ENCODE measurements at regions of chr20 and their contacts with region 1.

Region 1: GRCh38 chr20:47411161-47411560 is 54.7 kb upstream of the ZMYND8 start:
- DNase-seq: no peak
- ATAC-seq: no peak
- H3K4me3 ChIP-seq: peak overlapping the region in 4 of 5 experiments; percentile 30 to 56 (median 48)
- H3K4me3 Mint-ChIP-seq: peak overlapping the region; percentile 91
- H3K27ac ChIP-seq: peak overlapping the region; percentile 97 to 99
- H3K27ac Mint-ChIP-seq: peak overlapping the region; percentile 93
- H3K4me1 ChIP-seq: peaks cover 79 to 90% of the 10 kb centered on the region in 2 donors
- H3K4me1 Mint-ChIP-seq: peaks cover 76% of the 10 kb centered on the region
- H3K27me3 ChIP-seq: no peaks in the 10 kb centered on the region
- H3K27me3 Mint-ChIP-seq: no peaks in the 10 kb centered on the region
- CTCF ChIP-seq: no peak

Region 2: DNA sequence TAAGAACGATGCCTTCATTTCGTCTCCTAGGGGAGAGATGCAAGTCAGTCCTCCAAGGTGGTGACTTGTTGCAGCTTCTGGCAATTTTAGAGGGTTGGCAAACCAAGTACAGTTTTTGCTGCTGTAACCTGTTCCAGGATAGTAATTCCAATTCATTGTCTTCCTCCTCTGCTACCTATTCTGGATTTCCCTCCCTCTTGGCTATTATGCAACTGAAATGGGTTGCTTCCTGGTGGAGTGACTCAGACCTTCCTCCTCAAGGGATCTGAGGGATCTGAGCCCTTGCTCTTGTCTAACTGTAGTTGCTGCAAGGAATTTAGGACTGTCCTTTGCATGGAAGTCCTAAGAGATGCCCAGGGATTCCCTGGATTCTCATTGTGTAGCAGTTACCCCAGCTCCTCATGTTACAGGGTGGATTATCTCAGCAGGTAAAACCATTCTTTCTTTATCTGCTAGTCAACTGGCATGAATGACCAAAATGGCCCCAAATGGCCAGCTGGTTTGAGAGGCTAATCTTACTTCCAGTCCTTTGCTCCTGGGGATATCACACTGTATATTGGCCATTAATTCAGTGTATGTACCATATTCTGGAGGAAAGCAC is 987.2 kb before region 1 on chr20:
- CTCF ChIA-PET with region 1: no interaction called
- POLR2A ChIA-PET with region 1: no interaction called
- intact Hi-C with region 1: no loop called
- DNase-seq: no peak
- ATAC-seq: no peak
- H3K4me3 ChIP-seq: no peak overlapping the region
- H3K4me3 Mint-ChIP-seq: no peak overlapping the region
- H3K27ac ChIP-seq: no peak overlapping the region
- H3K27ac Mint-ChIP-seq: no peak overlapping the region
- H3K4me1 ChIP-seq: no peaks in the 10 kb centered on the region
- H3K4me1 Mint-ChIP-seq: no peaks in the 10 kb centered on the region
- H3K27me3 ChIP-seq: peaks cover 0 to 26% (median 13%) of the 10 kb centered on the region in 4 experiments
- H3K27me3 Mint-ChIP-seq: peaks cover 50% of the 10 kb centered on the region
- CTCF ChIP-seq: no peak

Region 3: GRCh38 chr20:47356526-47357295 is 54.5 kb before region 1 on chr20 and contains the start of gene ZMYND8:
- CTCF ChIA-PET with region 1: interaction called, 4 read pairs
- POLR2A ChIA-PET with region 1: interaction called, 5 read pairs
- intact Hi-C with region 1: loop called (anchors 2 kb)
- DNase-seq: peak; percentile 98
- ATAC-seq: peak; percentile 81
- H3K4me3 ChIP-seq: peak within 1 kb of the TSS; percentile 42 to 68 (median 56)
- H3K4me3 Mint-ChIP-seq: peak within 1 kb of the TSS; percentile 92
- H3K27ac ChIP-seq: peak within 1 kb of the TSS; percentile 90
- H3K27ac Mint-ChIP-seq: peak within 1 kb of the TSS; percentile 99
- H3K4me1 ChIP-seq: peaks cover 89 to 97% of the 10 kb centered on the region in 2 donors
- H3K4me1 Mint-ChIP-seq: peaks cover 57% of the 10 kb centered on the region
- H3K27me3 ChIP-seq: no peaks in the 10 kb centered on the region
- H3K27me3 Mint-ChIP-seq: no peaks in the 10 kb centered on the region
- CTCF ChIP-seq: no peak
- total RNA-seq, gene ZMYND8: 67.2 and 71.6 TPM in 2 replicates

Region 4: DNA sequence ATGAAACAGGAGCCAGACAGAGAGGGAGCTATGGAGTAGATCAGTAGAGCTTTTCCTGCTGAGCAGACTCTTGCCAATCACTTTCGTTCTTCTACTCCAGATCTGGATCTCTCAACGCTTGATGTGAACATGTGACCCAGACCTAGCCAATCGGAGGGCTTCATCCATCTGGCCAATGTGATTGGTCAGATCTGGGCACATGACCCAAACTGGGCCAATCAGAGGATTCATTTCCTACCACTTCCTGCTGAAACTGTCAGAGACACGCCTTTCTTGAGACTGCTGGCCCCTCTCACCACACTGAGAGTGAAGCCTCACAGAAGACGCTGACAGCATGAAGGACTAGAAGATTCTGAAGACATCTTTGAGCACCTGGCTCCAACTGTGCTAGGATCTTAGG is 10.5 kb before region 1 on chr20:
- CTCF ChIA-PET with region 1: interaction called, 5 read pairs
- POLR2A ChIA-PET with region 1: interaction called, 10 read pairs
- intact Hi-C with region 1: no loop called
- DNase-seq: no peak
- ATAC-seq: no peak
- H3K4me3 ChIP-seq: no peak overlapping the region
- H3K4me3 Mint-ChIP-seq: no peak overlapping the region
- H3K27ac ChIP-seq: no peak overlapping the region
- H3K27ac Mint-ChIP-seq: no peak overlapping the region
- H3K4me1 ChIP-seq: peaks cover 0 to 3% of the 10 kb centered on the region in 2 donors
- H3K4me1 Mint-ChIP-seq: peaks cover 25% of the 10 kb centered on the region
- H3K27me3 ChIP-seq: no peaks in the 10 kb centered on the region
- H3K27me3 Mint-ChIP-seq: no peaks in the 10 kb centered on the region
- CTCF ChIP-seq: no peak

Region 5: GRCh38 chr20:47468290-47469050 is 57.3 kb after region 1 on chr20:
- CTCF ChIA-PET with region 1: interaction called, 10 read pairs
- POLR2A ChIA-PET with region 1: interaction called, 33 read pairs
- intact Hi-C with region 1: loop called (anchors 1 kb)
- DNase-seq: peak; percentile 84
- ATAC-seq: peak; percentile 81
- H3K4me3 ChIP-seq: peak overlapping the region in 2 of 5 experiments; percentile 8 to 38
- H3K4me3 Mint-ChIP-seq: peak overlapping the region; percentile 68
- H3K27ac ChIP-seq: peak overlapping the region; percentile 66 to 79
- H3K27ac Mint-ChIP-seq: peak overlapping the region; percentile 95
- H3K4me1 ChIP-seq: peaks cover 42 to 55% of the 10 kb centered on the region in 2 donors
- H3K4me1 Mint-ChIP-seq: peaks cover 48% of the 10 kb centered on the region
- H3K27me3 ChIP-seq: no peaks in the 10 kb centered on the region
- H3K27me3 Mint-ChIP-seq: no peaks in the 10 kb centered on the region
- CTCF ChIP-seq: no peak

Region 6: GRCh38 chr20:47501483-47502270 is 90.5 kb after region 1 on chr20 and contains the start of gene NCOA3:
- CTCF ChIA-PET with region 1: interaction called, 46 read pairs
- POLR2A ChIA-PET with region 1: interaction called, 56 read pairs
- intact Hi-C with region 1: loop called (anchors 1 kb)
- DNase-seq: peak; percentile 93
- ATAC-seq: peak; percentile 91
- H3K4me3 ChIP-seq: peak within 1 kb of the TSS; percentile 90 to 99 (median 97)
- H3K4me3 Mint-ChIP-seq: peak within 1 kb of the TSS; percentile 100
- H3K27ac ChIP-seq: peak within 1 kb of the TSS; percentile 90 to 95
- H3K27ac Mint-ChIP-seq: peak within 1 kb of the TSS; percentile 100
- H3K4me1 ChIP-seq: peaks cover 28 to 33% of the 10 kb centered on the region in 2 donors
- H3K4me1 Mint-ChIP-seq: peaks cover 48% of the 10 kb centered on the region
- H3K27me3 ChIP-seq: no peaks in the 10 kb centered on the region
- H3K27me3 Mint-ChIP-seq: no peaks in the 10 kb centered on the region
- CTCF ChIP-seq: peak; percentile 59
- total RNA-seq, gene NCOA3: 289 and 309 TPM in 2 replicates

Measured in B cell (primary cell).